ENCODE measurements at regions of chr9 and their contacts with region 1.

Region 1: DNA sequence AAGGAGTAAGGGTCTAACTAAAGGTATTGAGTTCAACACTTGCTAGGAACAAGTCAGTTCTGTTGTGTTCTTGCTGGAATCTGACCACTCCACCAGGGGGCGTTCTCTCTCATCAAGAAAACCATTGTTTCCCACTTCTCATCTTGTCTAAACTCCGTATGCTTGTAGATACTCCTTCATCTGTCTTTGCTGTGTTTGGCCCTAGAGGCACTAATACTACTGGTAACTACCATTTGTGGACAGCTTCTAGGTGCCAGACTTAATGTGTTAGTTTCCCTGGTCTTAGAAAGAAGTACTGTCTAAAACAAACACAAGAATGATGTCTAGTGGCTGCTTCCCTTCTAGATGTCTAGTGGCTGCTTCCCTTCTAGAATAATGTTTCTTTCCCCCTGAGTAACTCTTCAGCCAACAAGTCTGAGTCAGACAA is 18.7 kb upstream of the PTPDC1 start:
- DNase-seq: peak; percentile 31 to 96 (median 84)

Region 2: DNA sequence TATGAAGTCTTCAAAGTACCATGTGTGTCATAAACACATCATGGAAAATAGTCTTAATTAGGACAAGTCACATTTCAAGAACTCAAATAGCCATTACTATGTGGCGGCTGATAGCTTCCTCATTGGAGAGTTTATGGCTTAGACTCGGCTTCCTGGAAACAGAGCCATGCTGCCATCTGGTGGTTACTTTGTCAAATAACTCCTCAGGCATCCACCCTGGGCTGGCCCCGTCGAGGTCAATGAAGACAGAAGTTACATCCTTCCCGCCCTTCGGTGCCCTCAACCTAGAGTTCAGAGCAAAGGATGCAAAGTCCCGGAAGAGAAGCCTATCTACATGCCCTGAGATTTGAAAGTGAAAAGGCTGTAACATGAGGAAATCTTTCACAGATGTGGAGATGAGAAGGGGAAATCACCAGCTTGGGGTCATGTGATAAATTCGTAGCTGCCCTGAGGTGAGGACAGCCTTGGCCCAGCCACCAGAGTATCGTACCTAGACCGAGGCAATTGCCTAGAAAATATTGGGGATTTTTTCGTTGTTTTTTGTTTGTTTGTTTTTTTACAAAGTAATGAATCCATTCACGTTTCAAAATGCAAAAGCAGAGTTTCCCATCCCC is 148.1 kb after region 1 on chr9:
- intact Hi-C with region 1: loop called (anchors 2 kb)
- DNase-seq: peak; percentile 53 to 92 (median 80)

Region 3: GRCh38 chr9:94576131-94576530 is 510.6 kb after region 1 on chr9:
- intact Hi-C with region 1: no loop called
- DNase-seq: no peak

Measured in head of caudate nucleus (tissue), 42 donors.